ENCODE measurements at regions of chr11 and their contacts with region 1.

Region 1: GRCh38 chr11:68312117-68312779 is at the start of gene LRP5:
- DNase-seq: peak; percentile 53
- H3K4me3 Mint-ChIP-seq: peak within 1 kb of the TSS; percentile 98
- H3K27ac Mint-ChIP-seq: peak within 1 kb of the TSS; percentile 95
- H3K4me1 Mint-ChIP-seq: peaks cover 51% of the 10 kb centered on the region
- H3K27me3 Mint-ChIP-seq: no peaks in the 10 kb centered on the region
- CTCF ChIP-seq: no peak
- total RNA-seq, gene LRP5: 64.8 and 82.0 TPM in 2 replicates

Region 2: GRCh38 chr11:68200639-68201038 is 111.6 kb before region 1 on chr11:
- CTCF ChIA-PET with region 1: no interaction called
- intact Hi-C with region 1: no loop called
- DNase-seq: no peak
- H3K4me3 Mint-ChIP-seq: no peak overlapping the region
- H3K27ac Mint-ChIP-seq: no peak overlapping the region
- H3K4me1 Mint-ChIP-seq: peaks cover 22% of the 10 kb centered on the region
- H3K27me3 Mint-ChIP-seq: no peaks in the 10 kb centered on the region
- CTCF ChIP-seq: no peak

Region 3: DNA sequence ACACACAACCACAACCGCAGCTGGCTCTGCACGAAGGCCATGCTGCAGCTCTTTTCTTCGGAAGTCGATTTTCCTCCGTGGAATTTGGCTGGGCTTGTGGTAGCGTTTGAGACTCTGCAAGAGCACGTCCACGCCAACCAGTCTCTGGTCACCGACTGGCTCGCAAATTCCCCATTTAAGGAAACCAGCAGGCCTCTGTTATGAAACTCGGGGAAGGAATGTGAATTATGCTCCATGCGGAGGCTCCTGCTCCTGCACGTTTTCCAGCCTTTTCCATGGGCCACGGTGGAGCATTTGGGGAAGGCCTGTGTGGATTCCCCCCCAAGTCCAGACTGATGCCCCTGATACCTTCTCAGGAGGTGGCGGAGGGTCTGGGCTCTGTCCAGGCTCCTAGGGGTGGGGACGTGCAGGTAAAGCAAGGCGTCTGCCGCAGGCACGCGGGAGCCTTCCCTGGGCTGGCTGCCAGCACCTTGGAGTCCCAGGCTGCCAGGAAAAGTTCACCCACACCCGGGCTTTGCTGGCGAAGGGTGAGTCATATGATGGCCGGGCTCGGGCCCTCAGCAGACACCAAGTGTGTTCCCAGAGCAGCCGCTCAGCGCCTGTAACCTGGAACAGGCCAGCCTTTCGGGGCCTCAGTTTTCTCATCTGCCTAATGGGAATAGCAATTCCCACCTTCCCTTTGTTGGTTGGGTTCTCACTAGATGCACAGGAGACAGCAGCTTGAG is 42.1 kb after region 1 on chr11:
- CTCF ChIA-PET with region 1: no interaction called
- intact Hi-C with region 1: no loop called
- DNase-seq: peak; percentile 94
- H3K4me3 Mint-ChIP-seq: no peak overlapping the region
- H3K27ac Mint-ChIP-seq: no peak overlapping the region
- H3K4me1 Mint-ChIP-seq: peaks cover 34% of the 10 kb centered on the region
- H3K27me3 Mint-ChIP-seq: no peaks in the 10 kb centered on the region
- CTCF ChIP-seq: no peak

Region 4: DNA sequence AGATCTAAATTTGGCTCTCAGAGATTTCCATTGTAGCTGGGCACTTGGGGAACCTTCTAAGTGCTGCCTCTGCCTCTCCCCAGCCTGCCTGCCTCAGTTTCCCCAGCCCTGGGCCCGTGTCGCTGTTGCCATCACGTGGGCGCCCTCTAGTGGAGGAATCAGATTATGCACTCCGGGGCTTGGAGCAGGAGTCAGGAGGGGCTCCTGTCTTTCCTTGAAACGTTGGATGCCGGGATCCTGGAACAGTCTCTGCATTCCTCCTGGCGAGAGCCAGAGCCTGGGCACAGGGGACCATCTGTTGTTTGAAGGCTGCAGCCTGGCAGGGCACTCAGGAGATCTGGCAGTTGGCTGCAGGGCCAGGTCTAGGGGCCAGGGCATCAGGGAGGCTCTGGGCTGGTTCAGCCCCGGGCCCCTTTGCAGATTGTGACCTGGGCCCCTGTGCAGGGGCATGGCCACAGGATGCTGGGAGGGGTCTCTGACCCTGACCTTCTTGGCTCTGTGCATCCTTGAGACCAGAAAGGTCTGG is 71.8 kb after region 1 on chr11:
- CTCF ChIA-PET with region 1: no interaction called
- intact Hi-C with region 1: loop called (anchors 10 kb)
- DNase-seq: peak; percentile 83
- H3K4me3 Mint-ChIP-seq: no peak overlapping the region
- H3K27ac Mint-ChIP-seq: no peak overlapping the region
- H3K4me1 Mint-ChIP-seq: peaks cover 25% of the 10 kb centered on the region
- H3K27me3 Mint-ChIP-seq: no peaks in the 10 kb centered on the region
- CTCF ChIP-seq: peak; percentile 97